Activated naive CD4-positive, alpha-beta T cell treated with anti-CD3 and anti-CD28 coated beads for 36 hours (primary cell): ENCODE measurements at regions of chr3 and their contacts with region 1.

Region 1: DNA sequence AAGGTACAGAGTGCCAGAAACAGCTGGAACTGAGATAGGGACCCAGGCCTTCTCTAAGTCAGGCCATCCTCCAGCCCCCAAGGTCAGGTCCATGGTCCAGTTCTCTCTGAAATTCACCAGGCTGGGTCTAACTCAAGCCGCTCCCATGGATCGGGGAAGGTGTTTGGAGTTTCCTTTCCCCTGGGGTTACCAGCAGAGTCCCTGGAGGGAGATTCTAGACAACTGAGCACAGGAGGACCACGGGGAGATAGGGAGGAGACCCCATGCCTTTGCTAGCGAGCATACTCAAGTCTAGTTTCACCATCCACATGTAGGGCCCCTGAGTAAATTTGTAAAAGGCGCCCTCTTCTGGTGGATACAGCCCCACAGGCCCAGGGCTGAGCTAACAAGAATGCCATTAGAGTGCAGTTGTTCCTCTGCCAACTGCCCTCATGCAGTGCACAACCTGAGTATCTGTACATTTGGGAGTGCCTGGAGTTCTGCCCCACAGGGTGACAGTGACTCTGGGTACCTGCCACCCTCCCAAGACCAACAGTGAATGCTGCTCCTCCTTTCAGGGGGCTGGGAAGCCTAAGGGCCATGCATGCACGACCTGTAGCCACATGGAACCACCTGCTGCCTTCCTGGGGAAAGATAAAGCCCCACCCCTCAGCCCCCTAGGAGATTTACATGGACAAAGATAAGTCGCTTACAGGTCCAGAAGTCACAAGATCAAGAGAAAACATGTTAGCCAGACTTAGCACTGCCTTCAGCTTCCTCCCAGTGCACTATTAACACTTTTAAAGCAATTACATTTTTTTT is 89.0 kb downstream of the IQSEC1 start:
- DNase-seq: peak; percentile 84
- H3K4me3 Mint-ChIP-seq: no peak overlapping the region
- H3K27ac Mint-ChIP-seq: no peak overlapping the region
- H3K4me1 Mint-ChIP-seq: peaks cover 47% of the 10 kb centered on the region
- H3K27me3 Mint-ChIP-seq: no peaks in the 10 kb centered on the region

Region 2: DNA sequence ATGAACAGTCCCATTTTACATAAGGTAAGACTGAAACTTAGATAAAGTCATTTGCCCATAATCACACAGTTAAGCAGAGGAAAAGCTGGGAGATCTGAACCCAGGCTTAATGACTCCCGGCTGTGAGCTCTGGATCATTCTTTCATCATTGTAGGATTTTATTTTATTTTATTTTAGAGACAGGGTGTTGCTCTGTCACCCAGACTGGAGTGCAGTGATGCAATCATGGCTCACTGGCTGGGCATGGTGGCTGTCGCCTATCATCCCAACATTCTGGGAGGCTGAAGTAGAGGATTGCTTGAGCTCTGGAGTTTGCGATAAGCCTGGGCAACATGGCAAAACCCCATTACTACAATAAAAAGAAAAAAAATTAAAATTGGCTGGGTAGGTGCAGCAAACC is 289.1 kb before region 1 on chr3:
- CTCF ChIA-PET with region 1: no interaction called
- intact Hi-C with region 1: no loop called
- DNase-seq: no peak
- H3K4me3 Mint-ChIP-seq: no peak overlapping the region
- H3K27ac Mint-ChIP-seq: no peak overlapping the region
- H3K4me1 Mint-ChIP-seq: no peaks in the 10 kb centered on the region
- H3K27me3 Mint-ChIP-seq: no peaks in the 10 kb centered on the region

Region 3: DNA sequence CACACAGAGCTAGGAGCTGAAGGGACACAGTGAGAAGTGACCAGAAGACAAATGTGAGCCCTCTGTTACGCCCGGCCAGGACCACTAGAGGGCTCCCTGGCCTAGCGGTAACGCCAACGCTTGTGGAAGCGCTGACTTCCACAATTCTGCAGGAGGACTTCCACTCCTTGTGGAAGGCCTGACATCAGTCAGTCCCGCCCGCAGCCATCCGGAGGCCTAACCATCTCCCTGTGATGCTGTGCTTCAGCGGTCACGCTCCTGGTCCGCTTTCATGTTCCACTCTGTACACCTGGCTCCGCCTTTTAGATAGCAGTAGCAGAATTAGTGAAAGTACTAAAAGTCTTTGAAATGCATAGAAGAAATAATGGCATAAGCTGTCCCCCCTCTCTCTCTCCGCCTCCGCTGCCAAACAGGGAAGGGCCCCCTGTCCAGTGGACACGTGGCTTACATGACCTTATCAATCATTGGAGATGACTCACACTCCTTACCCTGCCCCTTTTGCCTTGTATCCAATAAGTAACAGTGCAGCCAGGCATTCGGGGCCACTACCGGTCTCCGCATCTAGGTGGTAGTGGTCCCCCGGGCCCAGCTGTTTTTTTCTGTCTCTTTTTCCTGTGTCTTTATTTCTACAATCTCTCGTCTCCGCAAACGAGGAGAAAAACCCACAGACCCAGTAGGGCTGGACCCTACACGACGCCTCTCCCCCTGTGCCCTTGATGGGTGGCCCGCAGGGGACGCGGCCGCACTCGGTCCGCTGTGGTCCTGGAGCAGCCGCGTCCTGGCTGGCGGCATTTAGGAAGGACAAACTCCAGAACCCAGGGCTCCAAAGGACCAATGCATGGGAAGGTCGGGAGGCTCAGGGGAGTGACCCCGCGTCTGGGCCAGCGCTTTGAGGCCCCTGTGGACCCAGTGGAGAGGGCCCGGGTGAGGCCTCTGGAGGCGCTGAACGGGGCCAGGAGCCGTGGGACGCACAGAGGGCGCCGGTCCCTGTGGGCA is 115.9 kb before region 1 on chr3:
- CTCF ChIA-PET with region 1: interaction called, 7 read pairs
- intact Hi-C with region 1: loop called (anchors 1 kb)
- DNase-seq: peak; percentile 71
- H3K4me3 Mint-ChIP-seq: peak overlapping the region; percentile 67
- H3K27ac Mint-ChIP-seq: no peak overlapping the region
- H3K4me1 Mint-ChIP-seq: peaks cover 7% of the 10 kb centered on the region
- H3K27me3 Mint-ChIP-seq: peaks cover 16% of the 10 kb centered on the region

Region 4: DNA sequence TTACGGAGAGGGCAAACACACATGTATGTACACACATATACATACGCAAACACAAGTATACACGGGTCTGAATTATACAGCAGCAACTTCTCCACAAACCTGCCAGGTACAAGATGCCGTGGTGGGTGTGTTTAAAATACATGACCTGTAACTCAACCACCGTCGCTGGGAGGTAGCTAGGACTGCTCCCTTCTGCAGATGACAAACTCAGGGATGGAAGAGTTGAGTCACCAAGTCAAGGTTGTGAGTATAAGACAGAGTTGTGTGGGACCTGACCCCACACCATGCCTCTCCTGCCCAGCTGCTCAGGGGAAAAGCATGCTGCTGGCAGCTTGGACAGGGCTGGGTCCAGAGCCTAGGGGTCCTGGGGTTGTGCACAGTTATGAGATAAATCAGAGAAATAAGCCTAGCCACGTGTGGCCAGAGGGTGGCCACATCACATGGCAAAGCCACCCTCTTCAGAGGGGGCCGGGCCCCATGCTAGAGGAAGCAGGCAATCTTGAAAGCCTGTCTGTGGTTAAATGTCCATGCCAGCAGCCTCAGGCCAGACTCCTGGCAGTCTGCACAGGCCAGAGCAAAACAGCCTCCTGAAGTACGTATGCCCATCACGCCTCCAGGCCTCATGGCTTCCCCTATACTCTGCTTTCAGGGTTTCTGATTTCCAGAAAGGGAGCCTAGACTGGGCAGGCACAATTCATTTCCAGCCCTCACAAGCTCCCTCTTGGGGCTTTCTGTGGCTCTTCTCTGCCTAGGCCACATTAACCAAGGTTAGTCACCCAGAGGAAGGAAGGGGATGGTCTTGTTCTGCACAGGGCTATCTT is 35.1 kb before region 1 on chr3:
- CTCF ChIA-PET with region 1: interaction called, 17 read pairs
- intact Hi-C with region 1: loop called (anchors 2 kb)
- DNase-seq: peak; percentile 62
- H3K4me3 Mint-ChIP-seq: no peak overlapping the region
- H3K27ac Mint-ChIP-seq: peak overlapping the region; percentile 69
- H3K4me1 Mint-ChIP-seq: peaks cover 50% of the 10 kb centered on the region
- H3K27me3 Mint-ChIP-seq: no peaks in the 10 kb centered on the region

Region 5: DNA sequence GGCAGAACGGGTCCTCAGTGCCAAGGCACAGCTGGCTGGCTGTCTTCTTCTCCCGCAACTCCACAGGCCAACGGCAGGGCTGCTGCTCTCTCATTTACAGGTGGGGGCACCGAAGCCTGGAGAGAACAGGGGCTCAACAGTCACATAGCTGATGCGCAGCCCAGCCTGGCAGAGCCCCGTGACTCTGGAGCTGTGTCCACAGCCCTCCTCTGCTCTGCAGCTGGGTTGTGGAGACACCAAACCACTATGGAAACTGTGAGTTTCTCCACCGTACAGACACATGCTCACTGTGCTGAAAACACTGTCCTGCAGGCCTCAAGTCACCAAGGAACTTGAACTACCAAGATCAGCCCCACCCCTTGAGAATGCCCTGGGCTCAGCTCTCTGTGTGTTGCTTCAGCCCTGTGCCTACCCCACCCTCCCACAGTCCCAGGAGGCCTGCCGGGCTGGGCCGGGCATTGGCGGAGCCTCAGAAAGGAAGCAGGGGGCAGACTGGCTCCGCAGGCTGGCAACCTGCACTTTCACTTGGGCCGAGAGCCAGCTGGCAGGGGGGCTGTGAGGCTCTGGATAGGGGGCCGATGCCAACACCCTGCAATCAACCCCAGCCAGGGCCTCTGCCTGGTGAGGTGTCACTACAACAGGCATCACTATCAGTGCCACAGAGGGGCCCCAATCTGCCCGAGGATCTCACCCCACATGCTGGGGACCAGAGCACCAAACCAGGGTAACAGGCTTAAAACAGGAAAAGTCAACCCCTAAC is 29.2 kb before region 1 on chr3:
- CTCF ChIA-PET with region 1: interaction called, 14 read pairs
- intact Hi-C with region 1: loop called (anchors 2 kb)
- DNase-seq: peak; percentile 43
- H3K4me3 Mint-ChIP-seq: no peak overlapping the region
- H3K27ac Mint-ChIP-seq: no peak overlapping the region
- H3K4me1 Mint-ChIP-seq: peaks cover 68% of the 10 kb centered on the region
- H3K27me3 Mint-ChIP-seq: no peaks in the 10 kb centered on the region

Region 6: DNA sequence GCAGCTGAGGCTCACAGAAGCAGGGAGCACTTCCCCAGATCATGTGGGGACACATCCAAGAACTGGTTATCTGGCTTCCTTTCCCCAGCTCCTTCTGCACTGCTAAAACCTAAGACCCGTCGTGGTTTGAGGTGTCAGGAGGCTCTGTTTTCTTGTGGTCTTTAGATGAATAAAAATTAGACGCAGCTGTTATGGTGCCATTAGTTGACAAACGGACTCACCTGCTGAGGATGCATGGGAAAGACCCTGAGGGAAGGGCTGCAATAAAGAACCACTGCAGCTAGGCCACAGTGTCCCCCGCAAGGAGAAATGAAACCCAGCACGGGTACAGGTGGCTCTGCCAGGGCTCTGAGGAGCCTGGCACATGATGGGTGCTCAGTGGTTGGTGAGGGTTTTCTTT is 10.4 kb before region 1 on chr3:
- CTCF ChIA-PET with region 1: interaction called, 15 read pairs
- intact Hi-C with region 1: no loop called
- DNase-seq: no peak
- H3K4me3 Mint-ChIP-seq: no peak overlapping the region
- H3K27ac Mint-ChIP-seq: no peak overlapping the region
- H3K4me1 Mint-ChIP-seq: peaks cover 6% of the 10 kb centered on the region
- H3K27me3 Mint-ChIP-seq: no peaks in the 10 kb centered on the region

Region 7: GRCh38 chr3:12994607-12995388 is 10.6 kb after region 1 on chr3:
- CTCF ChIA-PET with region 1: interaction called, 18 read pairs
- intact Hi-C with region 1: loop called (anchors 1 kb)
- DNase-seq: peak; percentile 90
- H3K4me3 Mint-ChIP-seq: peak overlapping the region; percentile 86
- H3K27ac Mint-ChIP-seq: peak overlapping the region; percentile 87
- H3K4me1 Mint-ChIP-seq: peaks cover 71% of the 10 kb centered on the region
- H3K27me3 Mint-ChIP-seq: no peaks in the 10 kb centered on the region

Region 8: DNA sequence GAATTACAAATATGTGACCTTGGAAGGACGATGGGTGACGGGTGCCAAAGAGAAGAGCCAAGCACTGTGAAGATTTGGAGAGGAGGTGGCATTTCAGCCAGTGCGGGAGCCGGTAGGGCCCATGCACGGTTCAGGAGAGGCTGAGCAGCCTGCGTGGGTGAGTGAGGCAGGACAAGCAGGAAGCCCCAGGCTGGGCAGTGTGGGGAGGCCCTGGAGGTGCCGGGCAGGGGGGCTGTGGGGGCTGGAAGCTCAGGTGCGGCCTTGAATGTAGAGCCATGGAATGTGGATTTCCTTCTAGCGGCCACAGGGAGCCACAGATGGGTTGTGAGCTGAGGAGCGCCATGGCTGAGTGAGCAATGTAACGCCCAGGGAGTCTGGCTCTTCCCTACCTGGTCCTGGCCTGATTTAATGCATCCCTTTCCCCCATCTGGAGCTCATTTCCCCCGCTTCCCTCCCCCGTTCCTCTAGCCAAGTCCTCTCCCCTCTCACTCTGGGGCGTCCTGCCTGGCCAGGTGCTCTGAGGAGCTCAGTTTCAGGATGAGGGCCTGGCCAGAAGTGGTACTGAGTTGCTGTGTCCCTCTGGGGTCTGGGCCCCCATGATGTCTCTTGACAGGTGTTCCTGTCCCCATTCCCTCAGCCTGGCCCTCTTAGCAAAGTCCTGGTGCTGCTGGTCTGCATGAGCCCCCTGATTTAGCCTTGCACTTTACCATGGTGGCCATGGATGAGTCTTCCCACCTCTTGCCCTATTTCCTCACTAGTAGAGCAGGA is 130.8 kb after region 1 on chr3:
- CTCF ChIA-PET with region 1: no interaction called
- intact Hi-C with region 1: no loop called
- DNase-seq: no peak
- H3K4me3 Mint-ChIP-seq: no peak overlapping the region
- H3K27ac Mint-ChIP-seq: no peak overlapping the region
- H3K4me1 Mint-ChIP-seq: peaks cover 7% of the 10 kb centered on the region
- H3K27me3 Mint-ChIP-seq: no peaks in the 10 kb centered on the region